Posterior vena cava (tissue), 2 donors: ENCODE measurements at regions of chr1 and their contacts with region 1.

Region 1: DNA sequence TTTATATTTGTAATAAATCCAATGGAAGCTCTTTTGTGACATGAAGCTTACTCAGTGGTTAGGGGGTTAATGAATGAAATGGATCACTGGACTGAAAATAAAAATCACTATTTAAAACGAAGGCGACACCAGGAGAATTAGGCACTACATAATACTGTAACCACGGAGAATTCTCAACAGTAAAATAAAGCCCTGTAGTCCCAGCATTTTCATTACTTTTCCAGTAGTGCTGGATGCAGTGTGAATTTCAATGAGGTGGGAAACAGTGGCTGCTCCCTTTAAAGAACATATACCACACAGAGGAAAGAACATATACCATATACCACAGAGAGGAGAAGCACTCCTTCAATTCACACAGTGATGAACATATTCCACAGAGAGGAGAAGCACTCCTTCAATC is 275.0 kb downstream of the SMYD3 start:
- DNase-seq: no peak

Region 2: GRCh38 chr1:246161626-246162025 is 70.5 kb before region 1 on chr1:
- intact Hi-C with region 1: no loop called
- DNase-seq: no peak

Region 3: GRCh38 chr1:246255773-246256172 is 23.6 kb after region 1 on chr1:
- intact Hi-C with region 1: loop called in 1 of 2 experiments (anchors 1 kb)
- DNase-seq: no peak

Region 4: GRCh38 chr1:246280551-246280950 is 48.4 kb after region 1 on chr1:
- intact Hi-C with region 1: no loop called
- DNase-seq: no peak